H1 (cell line): ENCODE measurements at regions of chr12 and their contacts with region 1.

Region 1: DNA sequence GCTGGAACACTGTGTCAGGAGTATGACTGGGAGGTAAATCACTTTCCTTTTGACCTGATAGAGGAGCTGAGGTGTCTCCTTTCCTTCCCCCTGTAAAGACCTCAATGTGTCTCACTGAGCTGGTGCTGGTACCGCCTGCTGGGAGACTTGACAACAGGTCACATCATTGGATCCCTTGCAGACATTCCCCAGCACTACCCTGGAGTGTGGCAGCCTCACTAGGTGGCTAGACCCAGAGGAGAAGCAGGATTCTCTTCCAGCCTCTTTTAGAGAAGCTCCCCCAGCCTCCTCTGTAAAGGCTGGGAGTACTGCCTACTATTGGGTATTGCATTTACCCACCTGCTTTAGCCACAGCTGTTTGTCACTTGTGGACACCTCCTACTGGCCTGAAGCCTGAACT is 223.9 kb downstream of the ADGRD1 start:
- DNase-seq: peak in 1 of 2 experiments; percentile 4
- H3K4me3 ChIP-seq: no peak overlapping the region
- H3K27ac ChIP-seq: no peak overlapping the region
- H3K4me1 ChIP-seq: no peaks in the 10 kb centered on the region
- H3K27me3 ChIP-seq: no peaks in the 10 kb centered on the region
- CTCF ChIP-seq: no peak
- EP300 ChIP-seq: no peak
- POLR2A ChIP-seq: no peak
- RAD21 ChIP-seq: no peak; a peak in 1 of 4 replicates

Region 2: GRCh38 chr12:131068048-131068892 is 109.3 kb before region 1 on chr12:
- CTCF ChIA-PET with region 1: no interaction called
- POLR2A ChIA-PET with region 1: no interaction called
- DNase-seq: no peak
- H3K4me3 ChIP-seq: no peak overlapping the region
- H3K27ac ChIP-seq: no peak overlapping the region
- H3K4me1 ChIP-seq: no peaks in the 10 kb centered on the region
- H3K27me3 ChIP-seq: no peaks in the 10 kb centered on the region
- CTCF ChIP-seq: no peak
- EP300 ChIP-seq: no peak
- POLR2A ChIP-seq: no peak
- RAD21 ChIP-seq: no peak

Region 3: DNA sequence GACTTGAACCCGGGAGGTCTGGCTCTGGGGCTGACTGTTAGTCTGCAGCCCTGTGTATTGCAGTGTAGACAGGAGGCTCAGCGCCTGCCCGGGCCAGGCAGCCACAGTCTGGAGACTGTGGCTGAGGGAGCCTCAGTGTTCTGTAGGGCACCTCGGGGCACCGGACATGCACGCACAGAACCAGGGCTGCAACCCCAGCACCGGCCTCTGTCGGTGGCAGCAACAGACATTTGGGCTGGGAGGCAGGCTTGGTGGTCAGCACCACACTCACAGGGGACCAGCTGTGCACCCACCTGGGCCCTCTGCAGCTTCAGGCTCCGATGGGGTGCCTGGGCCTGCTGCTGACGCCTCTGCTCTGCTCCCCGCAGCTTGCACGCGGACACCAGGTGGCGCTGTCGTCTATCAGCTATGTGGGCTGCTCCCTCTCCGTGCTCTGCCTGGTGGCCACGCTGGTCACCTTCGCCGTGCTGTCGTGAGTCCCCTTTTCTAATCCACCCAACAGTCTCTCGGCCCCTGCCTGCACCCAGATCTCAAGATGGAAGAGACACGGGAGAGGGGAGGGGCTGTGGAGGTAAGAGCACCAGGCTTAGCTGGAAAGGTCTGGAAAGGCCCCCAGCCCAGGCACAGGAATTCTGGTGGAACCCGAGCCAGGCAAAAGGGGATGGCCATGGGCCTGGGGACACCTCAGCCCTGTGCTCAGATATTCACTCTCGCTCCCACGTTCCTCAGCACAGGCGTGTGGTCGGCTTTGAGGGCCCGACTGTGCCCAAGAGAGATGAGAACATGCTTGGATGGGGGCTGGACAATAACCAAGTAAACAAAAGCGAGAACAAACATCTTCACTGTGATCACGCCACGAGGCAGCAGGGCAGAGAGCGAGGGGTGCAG is 72.9 kb before region 1 on chr12:
- CTCF ChIA-PET with region 1: no interaction called
- POLR2A ChIA-PET with region 1: no interaction called
- DNase-seq: peak; percentile 63 to 96
- H3K4me3 ChIP-seq: no peak overlapping the region
- H3K27ac ChIP-seq: no peak overlapping the region
- H3K4me1 ChIP-seq: no peaks in the 10 kb centered on the region; a peak in 1 of 7 replicates
- H3K27me3 ChIP-seq: no peaks in the 10 kb centered on the region
- CTCF ChIP-seq: peak; percentile 99 to 100 (median 99)
- EP300 ChIP-seq: no peak
- POLR2A ChIP-seq: no peak
- RAD21 ChIP-seq: peak; percentile 91 to 92

Region 4: DNA sequence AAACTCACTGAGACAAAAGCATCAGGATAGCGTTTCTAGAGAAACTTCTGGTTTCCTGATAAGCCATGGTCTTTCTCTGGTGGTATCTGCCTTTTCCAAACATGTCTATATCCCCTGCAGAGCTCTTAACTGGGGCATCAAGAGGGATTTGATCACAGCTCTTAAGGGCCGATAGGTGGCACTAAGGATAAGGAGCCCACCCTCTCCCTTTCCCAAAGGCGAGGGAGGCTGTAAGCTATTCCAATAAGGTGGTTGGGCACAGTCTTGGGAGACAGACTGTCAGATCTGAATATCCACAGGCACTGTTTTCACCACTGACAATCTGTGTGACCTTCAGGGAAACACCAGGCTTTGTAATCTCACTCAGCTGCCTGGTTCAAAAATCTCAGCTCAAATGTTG is 17.9 kb before region 1 on chr12:
- CTCF ChIA-PET with region 1: interaction called, 12 read pairs
- POLR2A ChIA-PET with region 1: no interaction called
- DNase-seq: peak in 1 of 2 experiments; percentile 13
- H3K4me3 ChIP-seq: no peak overlapping the region
- H3K27ac ChIP-seq: no peak overlapping the region
- H3K4me1 ChIP-seq: no peaks in the 10 kb centered on the region
- H3K27me3 ChIP-seq: no peaks in the 10 kb centered on the region
- CTCF ChIP-seq: peak; percentile 25 to 69 (median 54)
- EP300 ChIP-seq: no peak
- POLR2A ChIP-seq: no peak
- RAD21 ChIP-seq: peak; percentile 68 to 75